OCI-LY7 (cell line): ENCODE measurements at regions of chr5 and their contacts with region 1.

Region 1: GRCh38 chr5:82351754-82352145 is 73.6 kb upstream of the RPS23 start:
- DNase-seq: peak; percentile 51
- H3K4me3 ChIP-seq: no peak overlapping the region
- H3K27ac ChIP-seq: no peak overlapping the region
- H3K4me1 ChIP-seq: no peaks in the 10 kb centered on the region
- CTCF ChIP-seq: peak; percentile 91

Region 2: DNA sequence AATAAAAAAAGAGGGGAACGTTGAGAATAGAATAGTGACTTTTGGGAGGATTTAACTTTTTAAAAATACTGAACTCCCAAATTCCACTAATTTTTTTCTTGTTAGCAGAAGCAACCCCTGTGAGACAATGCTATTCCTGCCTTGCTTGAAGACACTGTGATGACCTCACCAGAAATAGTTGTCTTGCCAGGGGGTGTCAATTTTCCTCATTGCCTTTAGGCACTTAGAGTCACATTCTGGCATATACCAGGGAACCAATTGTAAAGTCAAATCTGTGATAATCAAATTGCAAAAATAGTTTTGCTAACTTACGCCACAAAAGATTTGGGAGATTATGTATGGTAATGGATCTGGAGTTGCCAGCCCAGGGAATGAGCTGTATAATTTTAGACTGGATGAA is 30.8 kb before region 1 on chr5:
- CTCF ChIA-PET with region 1: no interaction called
- POLR2A ChIA-PET with region 1: no interaction called
- intact Hi-C with region 1: no loop called
- DNase-seq: no peak
- H3K4me3 ChIP-seq: no peak overlapping the region
- H3K27ac ChIP-seq: no peak overlapping the region
- H3K4me1 ChIP-seq: no peaks in the 10 kb centered on the region
- CTCF ChIP-seq: no peak

Region 3: DNA sequence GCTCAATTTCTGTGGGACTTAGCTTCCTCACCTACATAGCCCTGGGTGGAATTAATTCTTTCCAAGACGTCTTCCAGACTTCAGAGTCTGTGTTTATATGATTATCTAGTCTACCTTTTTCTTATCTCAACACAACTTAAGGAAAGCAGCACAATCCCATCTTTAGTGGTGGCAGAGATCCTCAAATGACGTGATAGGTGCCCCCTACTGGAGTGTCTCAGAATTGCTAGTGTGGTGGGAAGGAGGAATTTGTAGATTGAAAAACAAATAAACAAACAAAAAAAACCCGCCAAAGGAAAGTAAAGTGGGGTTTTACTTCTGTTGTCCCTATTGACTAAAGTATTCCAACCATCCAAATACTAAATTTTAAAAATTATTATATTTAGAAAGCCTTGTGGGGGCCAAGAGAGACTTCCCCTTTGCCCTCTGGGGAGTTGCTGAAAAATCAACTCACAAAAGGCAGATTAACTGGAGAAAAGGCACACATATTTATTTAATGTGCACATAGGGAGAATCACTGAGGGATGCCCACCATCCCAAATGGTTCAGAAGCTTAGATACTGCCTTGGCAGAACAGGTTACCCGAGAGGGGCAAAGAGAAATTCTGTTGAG is 442.2 kb after region 1 on chr5:
- CTCF ChIA-PET with region 1: interaction called, 3 read pairs
- POLR2A ChIA-PET with region 1: no interaction called
- intact Hi-C with region 1: loop called (anchors 5 kb)
- DNase-seq: peak; percentile 24
- H3K4me3 ChIP-seq: no peak overlapping the region
- H3K27ac ChIP-seq: no peak overlapping the region
- H3K4me1 ChIP-seq: no peaks in the 10 kb centered on the region
- CTCF ChIP-seq: peak; percentile 87

Region 4: GRCh38 chr5:83430130-83431010 is 1078.6 kb after region 1 on chr5:
- CTCF ChIA-PET with region 1: no interaction called
- POLR2A ChIA-PET with region 1: no interaction called
- intact Hi-C with region 1: loop called (anchors 5 kb)
- DNase-seq: peak; percentile 52
- H3K4me3 ChIP-seq: no peak overlapping the region
- H3K27ac ChIP-seq: no peak overlapping the region
- H3K4me1 ChIP-seq: no peaks in the 10 kb centered on the region
- CTCF ChIP-seq: peak; percentile 93

Region 5: GRCh38 chr5:83564069-83564749 is 1212.5 kb after region 1 on chr5:
- CTCF ChIA-PET with region 1: no interaction called
- POLR2A ChIA-PET with region 1: no interaction called
- intact Hi-C with region 1: loop called (anchors 1 kb)
- DNase-seq: peak; percentile 47
- H3K4me3 ChIP-seq: no peak overlapping the region
- H3K27ac ChIP-seq: no peak overlapping the region
- H3K4me1 ChIP-seq: no peaks in the 10 kb centered on the region
- CTCF ChIP-seq: peak; percentile 91